HepG2 (cell line): ENCODE measurements at regions of chr19 and their contacts with region 1.

Region 1: GRCh38 chr19:57362997-57363705 is at the starts of genes TRAPPC2B and ZNF547:
- DNase-seq: peak; percentile 99
- ATAC-seq: peak; percentile 99
- H3K4me3 ChIP-seq: peak within 1 kb of the TSS; percentile 75 to 85 (median 77)
- H3K27ac ChIP-seq: peak within 1 kb of the TSS; percentile 82
- H3K4me1 ChIP-seq: peaks cover 13% of the 10 kb centered on the region; the same call in 1 of the 2 replicates
- H3K27me3 ChIP-seq: no peaks in the 10 kb centered on the region
- CTCF ChIP-seq: 0 out of 2 replicates have a peak, but pooled peaks have one; percentile 15
- EP300 ChIP-seq: no peak
- POLR2A ChIP-seq: peak; percentile 81 to 94
- RAD21 ChIP-seq: no peak
- total RNA-seq, gene TRAPPC2B: 13.3 and 20.5 TPM in 2 replicates
- total RNA-seq, gene ZNF547: 2.1 and 2.6 TPM in 2 replicates

Region 2: DNA sequence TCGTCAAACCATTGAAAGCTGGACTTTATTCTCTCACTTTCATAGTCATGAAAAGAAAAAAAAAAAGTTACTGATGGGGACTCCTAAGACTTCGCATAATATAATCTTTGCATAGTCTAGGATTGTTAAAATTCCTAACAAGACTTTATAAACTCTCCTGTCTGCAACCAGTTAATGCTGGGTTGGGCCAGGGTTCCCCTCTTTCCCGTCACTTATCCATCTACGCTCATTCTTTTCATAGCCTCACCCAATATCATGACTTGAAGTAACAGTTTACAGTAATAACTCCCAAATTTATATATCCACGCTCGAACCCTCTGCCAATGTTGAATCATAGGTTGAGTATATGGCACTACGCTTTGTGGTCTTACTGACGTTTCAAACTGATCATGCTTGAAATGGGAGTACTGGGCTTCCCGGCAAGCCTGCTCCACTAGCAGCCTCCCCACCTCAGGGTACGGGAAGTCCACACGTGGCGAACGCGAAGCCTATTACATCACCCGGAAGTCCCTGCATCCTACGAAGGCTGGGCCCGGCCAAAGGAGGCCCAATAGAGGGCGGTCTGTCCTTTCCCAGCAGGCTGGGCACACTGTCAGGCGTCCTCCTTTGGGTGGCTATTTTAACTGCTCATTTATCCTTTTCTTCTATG is 83.6 kb before region 1 on chr19:
- CTCF ChIA-PET with region 1: no interaction called
- POLR2A ChIA-PET with region 1: interaction called, 4 read pairs
- in situ Hi-C with region 1: no loop called
- intact Hi-C with region 1: loop called (anchors 2 kb)
- DNase-seq: peak; percentile 95
- ATAC-seq: peak; percentile 94
- H3K4me3 ChIP-seq: peak overlapping the region; percentile 79 to 95 (median 87)
- H3K27ac ChIP-seq: peak overlapping the region; percentile 98
- H3K4me1 ChIP-seq: peaks cover 61% of the 10 kb centered on the region
- H3K27me3 ChIP-seq: no peaks in the 10 kb centered on the region; a peak in 1 of 5 replicates
- CTCF ChIP-seq: peak; percentile 78
- EP300 ChIP-seq: 0 out of 4 replicates have a peak, but pooled peaks of 1 of the 2 experiments have one; percentile 48
- POLR2A ChIP-seq: peak; percentile 81 to 93; a peak in 3 of 4 replicates
- RAD21 ChIP-seq: peak; percentile 11; the same call in 1 of the 2 replicates

Region 3: GRCh38 chr19:57320180-57321084 is 42.7 kb before region 1 on chr19 and contains the start of gene ZNF543:
- CTCF ChIA-PET with region 1: no interaction called
- POLR2A ChIA-PET with region 1: interaction called, 3 read pairs
- in situ Hi-C with region 1: no loop called
- intact Hi-C with region 1: loop called (anchors 5 kb)
- DNase-seq: peak; percentile 91
- ATAC-seq: peak; percentile 99
- H3K4me3 ChIP-seq: peak within 1 kb of the TSS; percentile 84 to 91 (median 88)
- H3K27ac ChIP-seq: peak within 1 kb of the TSS; percentile 64
- H3K4me1 ChIP-seq: peaks cover 25% of the 10 kb centered on the region
- H3K27me3 ChIP-seq: 0 out of 5 replicates have a peak, but pooled peaks cover 0 to 4% of the 10 kb centered on the region in 2 experiments
- CTCF ChIP-seq: no peak
- EP300 ChIP-seq: no peak
- POLR2A ChIP-seq: peak; percentile 78 to 84
- RAD21 ChIP-seq: no peak
- total RNA-seq, gene ZNF543: 8.9 and 10.4 TPM in 2 replicates

Region 4: DNA sequence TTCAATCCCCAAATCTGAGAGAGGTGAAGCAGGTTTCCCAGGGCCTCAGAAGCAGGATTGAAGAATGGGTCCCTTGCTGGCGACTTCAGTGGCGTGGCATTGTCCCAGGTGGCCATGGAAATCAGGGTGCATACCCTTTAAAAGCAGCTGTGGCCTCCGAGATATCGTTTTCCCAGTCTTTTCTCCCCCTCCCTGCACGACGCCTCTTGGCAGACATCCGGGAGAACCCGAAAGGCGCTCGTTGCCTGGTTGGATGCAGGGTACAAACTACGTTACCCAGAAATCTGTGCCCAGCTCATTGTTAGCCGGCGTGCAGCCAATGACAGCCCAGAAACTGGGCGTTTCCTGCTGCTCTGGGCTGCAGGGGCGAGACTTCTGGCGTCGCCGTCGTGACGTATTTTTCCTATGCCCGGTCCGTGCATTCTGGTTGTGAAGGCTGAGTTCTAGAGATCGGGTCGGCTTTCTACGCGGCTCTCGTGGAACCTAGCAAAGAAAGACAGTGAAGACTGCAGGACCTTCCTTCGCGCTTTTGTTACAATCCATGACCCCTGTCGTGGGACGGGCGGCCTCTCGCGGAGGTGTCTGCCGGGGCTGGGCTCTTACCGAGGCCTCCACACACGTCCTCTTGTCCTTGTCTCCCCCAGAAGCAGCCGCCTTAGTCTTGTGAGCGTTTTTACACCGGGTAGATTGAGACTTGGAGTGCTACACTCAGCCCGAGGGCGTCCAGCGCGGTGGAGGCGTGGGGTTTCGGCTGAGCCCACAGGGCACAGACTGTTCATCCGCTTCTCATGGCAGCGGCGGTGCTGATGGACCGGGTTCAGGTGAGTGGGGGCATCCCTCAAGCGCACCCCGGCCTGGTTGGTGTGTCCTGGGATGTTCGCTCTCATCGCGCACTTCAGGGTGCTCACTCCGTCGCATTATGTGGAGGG is 12.0 kb before region 1 on chr19 and contains the start of gene ZNF304:
- CTCF ChIA-PET with region 1: no interaction called
- POLR2A ChIA-PET with region 1: interaction called, 11 read pairs
- in situ Hi-C with region 1: no loop called
- intact Hi-C with region 1: no loop called
- DNase-seq: peak; percentile 93
- ATAC-seq: peak; percentile 100
- H3K4me3 ChIP-seq: peak within 1 kb of the TSS; percentile 79 to 100 (median 98)
- H3K27ac ChIP-seq: peak within 1 kb of the TSS; percentile 56
- H3K4me1 ChIP-seq: peaks cover 29% of the 10 kb centered on the region
- H3K27me3 ChIP-seq: no peaks in the 10 kb centered on the region; a peak in 1 of 5 replicates
- CTCF ChIP-seq: no peak
- EP300 ChIP-seq: no peak
- POLR2A ChIP-seq: peak; percentile 48 to 53; a peak in 2 of 4 replicates
- RAD21 ChIP-seq: no peak
- total RNA-seq, gene ZNF304: 8.0 and 9.5 TPM in 2 replicates

Region 5: GRCh38 chr19:57377498-57378146 is 14.5 kb after region 1 on chr19:
- CTCF ChIA-PET with region 1: no interaction called
- POLR2A ChIA-PET with region 1: no interaction called
- in situ Hi-C with region 1: no loop called
- intact Hi-C with region 1: no loop called
- DNase-seq: no peak
- ATAC-seq: no peak
- H3K4me3 ChIP-seq: no peak overlapping the region
- H3K27ac ChIP-seq: no peak overlapping the region
- H3K4me1 ChIP-seq: no peaks in the 10 kb centered on the region
- H3K27me3 ChIP-seq: no peaks in the 10 kb centered on the region
- CTCF ChIP-seq: no peak
- EP300 ChIP-seq: no peak
- POLR2A ChIP-seq: no peak
- RAD21 ChIP-seq: no peak

Region 6: DNA sequence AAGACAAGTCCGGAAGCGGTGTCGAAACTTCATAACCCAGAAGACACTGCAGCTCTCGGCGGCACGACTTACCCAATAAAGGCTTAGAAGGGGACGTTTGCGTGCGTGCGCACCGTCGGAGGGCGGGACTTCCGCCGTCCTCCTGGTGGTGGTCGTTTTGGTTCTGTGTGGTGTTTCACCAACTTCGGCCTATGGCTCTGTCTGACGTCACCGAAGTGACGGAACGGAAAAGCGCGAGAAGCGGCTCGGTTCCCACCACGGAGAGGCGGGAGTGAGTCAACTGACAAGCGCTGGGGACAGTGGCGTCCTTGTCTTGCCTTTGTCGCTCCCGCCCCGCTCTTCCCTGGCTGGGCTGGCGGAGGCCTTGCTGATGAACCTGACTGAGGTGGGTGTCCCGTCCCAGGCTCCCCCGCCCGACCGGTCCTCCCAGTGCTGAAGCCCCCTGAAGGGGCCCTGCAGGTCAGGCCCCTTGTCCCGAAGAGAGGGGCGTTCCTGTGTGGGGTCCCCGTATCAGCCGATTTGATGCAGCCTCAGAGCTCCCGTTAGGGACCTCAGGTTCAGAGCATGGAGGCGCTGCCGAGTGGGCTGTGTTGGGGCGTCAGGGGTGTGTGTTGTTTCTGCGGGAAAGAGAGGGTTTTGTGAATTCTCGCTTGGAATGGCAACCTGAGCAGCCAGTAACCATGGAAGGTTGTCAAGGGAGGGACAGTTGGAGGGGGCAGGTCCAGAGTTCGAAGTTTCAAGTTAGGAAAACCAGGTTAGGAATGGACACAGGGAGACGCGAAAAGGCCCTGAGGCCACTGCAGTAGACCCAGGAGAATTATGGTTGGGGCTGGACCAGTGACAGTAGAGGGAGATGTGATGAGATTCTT is 26.8 kb after region 1 on chr19 and contains the start of gene ZNF548:
- CTCF ChIA-PET with region 1: no interaction called
- POLR2A ChIA-PET with region 1: interaction called, 21 read pairs
- in situ Hi-C with region 1: no loop called
- intact Hi-C with region 1: loop called (anchors 1 kb)
- DNase-seq: peak; percentile 99
- ATAC-seq: peak; percentile 97
- H3K4me3 ChIP-seq: peak within 1 kb of the TSS; percentile 67 to 92 (median 88)
- H3K27ac ChIP-seq: peak within 1 kb of the TSS; percentile 97
- H3K4me1 ChIP-seq: peaks cover 41% of the 10 kb centered on the region
- H3K27me3 ChIP-seq: no peaks in the 10 kb centered on the region; a peak in 1 of 5 replicates
- CTCF ChIP-seq: peak; percentile 63
- EP300 ChIP-seq: 0 out of 4 replicates have a peak, but pooled peaks have one; percentile 6 to 9
- POLR2A ChIP-seq: peak; percentile 60 to 76
- RAD21 ChIP-seq: no peak; the same call in 1 of the 2 replicates
- total RNA-seq, gene ZNF548: 24.9 and 29.4 TPM in 2 replicates

Region 7: GRCh38 chr19:57406516-57407123 is 43.5 kb after region 1 on chr19:
- CTCF ChIA-PET with region 1: no interaction called
- POLR2A ChIA-PET with region 1: interaction called, 3 read pairs
- in situ Hi-C with region 1: no loop called
- intact Hi-C with region 1: loop called (anchors 5 kb)
- DNase-seq: peak; percentile 65
- ATAC-seq: peak; percentile 80
- H3K4me3 ChIP-seq: no peak overlapping the region; a peak in 1 of 6 replicates
- H3K27ac ChIP-seq: no peak overlapping the region
- H3K4me1 ChIP-seq: peaks cover 41% of the 10 kb centered on the region
- H3K27me3 ChIP-seq: no peaks in the 10 kb centered on the region
- CTCF ChIP-seq: peak; percentile 96
- EP300 ChIP-seq: no peak
- POLR2A ChIP-seq: no peak
- RAD21 ChIP-seq: peak; percentile 85

Region 8: GRCh38 chr19:57613941-57614743 is 251.0 kb after region 1 on chr19 and contains the start of gene ZNF134:
- CTCF ChIA-PET with region 1: no interaction called
- POLR2A ChIA-PET with region 1: no interaction called
- in situ Hi-C with region 1: no loop called
- intact Hi-C with region 1: loop called (anchors 2 kb)
- DNase-seq: peak; percentile 87
- ATAC-seq: peak; percentile 99
- H3K4me3 ChIP-seq: peak within 1 kb of the TSS; percentile 92 to 97 (median 97)
- H3K27ac ChIP-seq: peak within 1 kb of the TSS; percentile 59
- H3K4me1 ChIP-seq: peaks cover 42% of the 10 kb centered on the region
- H3K27me3 ChIP-seq: no peaks in the 10 kb centered on the region; a peak in 1 of 5 replicates
- CTCF ChIP-seq: peak; percentile 43
- EP300 ChIP-seq: no peak
- POLR2A ChIP-seq: peak; percentile 69 to 73
- RAD21 ChIP-seq: no peak; the same call in 1 of the 2 replicates
- total RNA-seq, gene ZNF134: 17.1 and 19.4 TPM in 2 replicates